ENCODE measurements at regions of chr18 and their contacts with region 1.

Region 1: GRCh38 chr18:23337599-23338444 is 115.3 kb upstream of the RIOK3 start:
- DNase-seq: peak in 1 of 3 donors; percentile 11
- H3K4me3 ChIP-seq: no peak overlapping the region
- H3K4me3 Mint-ChIP-seq: no peak overlapping the region
- H3K27ac ChIP-seq: no peak overlapping the region
- H3K27ac Mint-ChIP-seq: no peak overlapping the region
- H3K4me1 ChIP-seq: no peaks in the 10 kb centered on the region
- H3K4me1 Mint-ChIP-seq: no peaks in the 10 kb centered on the region
- H3K27me3 ChIP-seq: no peaks in the 10 kb centered on the region
- H3K27me3 Mint-ChIP-seq: no peaks in the 10 kb centered on the region
- CTCF ChIP-seq: no peak

Region 2: DNA sequence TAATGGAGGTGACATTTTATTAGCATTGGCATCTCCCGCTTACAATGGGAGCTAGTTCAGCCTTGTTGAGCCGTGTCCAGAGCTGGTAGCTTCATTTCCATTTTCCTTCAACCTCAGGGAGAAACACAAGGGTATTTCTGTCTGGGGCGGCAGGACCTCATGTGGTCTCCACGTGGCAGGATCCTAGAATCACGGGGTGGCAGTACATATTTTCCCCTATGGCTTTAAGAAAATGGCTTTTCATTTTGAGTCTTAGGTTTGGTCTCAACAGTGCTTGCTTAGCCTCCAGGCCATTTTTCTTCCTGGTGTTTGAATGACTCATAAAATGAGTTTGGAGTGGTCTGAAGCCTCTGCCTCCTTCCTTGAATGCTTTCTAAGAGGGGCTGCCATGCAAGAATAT is 182.3 kb before region 1 on chr18:
- intact Hi-C with region 1: loop called in 1 of 2 experiments (anchors 10 kb)
- DNase-seq: no peak
- H3K4me3 ChIP-seq: no peak overlapping the region
- H3K4me3 Mint-ChIP-seq: no peak overlapping the region
- H3K27ac ChIP-seq: no peak overlapping the region
- H3K27ac Mint-ChIP-seq: peak overlapping the region in 1 of 7 donors; percentile 5
- H3K4me1 ChIP-seq: no peaks in the 10 kb centered on the region
- H3K4me1 Mint-ChIP-seq: no peaks in the 10 kb centered on the region
- H3K27me3 ChIP-seq: no peaks in the 10 kb centered on the region
- H3K27me3 Mint-ChIP-seq: peaks cover 0 to 5% (median 4%) of the 10 kb centered on the region in 3 donors
- CTCF ChIP-seq: no peak